ENCODE measurements at regions of chr14 and their contacts with region 1.

Region 1: DNA sequence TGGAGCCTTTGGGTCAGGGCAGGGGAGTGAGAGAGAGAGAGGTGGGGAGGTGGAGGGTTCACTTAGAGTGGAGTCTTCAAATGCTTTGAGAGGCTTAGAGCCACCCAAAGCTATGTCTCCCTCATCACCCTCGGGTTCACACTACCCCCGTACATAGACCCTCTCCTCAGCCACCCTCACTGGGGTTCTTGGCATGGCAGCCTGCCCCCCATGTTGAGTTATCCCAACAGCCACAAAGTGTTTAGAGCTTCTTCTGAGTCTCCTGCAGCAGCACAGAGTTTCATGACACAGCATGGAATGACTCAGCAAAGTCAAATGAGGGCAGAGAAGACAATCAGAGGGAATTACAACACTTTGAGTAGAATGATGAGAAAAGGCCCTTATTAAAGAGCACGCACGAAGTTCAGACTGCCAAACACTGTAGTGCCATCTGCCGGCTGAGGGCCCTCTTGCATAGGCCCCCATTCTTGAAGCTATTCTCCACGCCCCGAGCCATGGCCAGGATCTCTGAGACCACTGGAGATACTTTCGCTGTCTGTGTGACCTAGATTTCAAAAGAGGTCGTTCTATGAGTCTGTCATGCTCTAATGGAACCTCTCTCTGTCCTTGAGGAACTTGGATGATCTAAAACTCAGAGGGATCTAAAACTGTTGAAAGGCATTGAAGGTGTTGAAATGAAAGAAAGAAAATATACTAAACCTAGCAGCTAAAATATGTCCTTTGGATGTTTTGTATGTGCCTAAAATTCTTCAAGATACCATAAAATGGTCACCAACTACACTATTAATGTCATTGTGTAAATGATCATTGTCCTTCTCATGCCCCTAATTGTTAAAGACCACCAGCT is 221.9 kb downstream of the PELI2 start:
- DNase-seq: peak; percentile 89
- H3K4me3 ChIP-seq: no peak overlapping the region
- H3K27ac ChIP-seq: peak overlapping the region; percentile 55
- H3K4me1 ChIP-seq: peaks cover 43% of the 10 kb centered on the region
- H3K27me3 ChIP-seq: no peaks in the 10 kb centered on the region
- CTCF ChIP-seq: peak; percentile 86 to 94
- POLR2A ChIP-seq: no peak

Region 2: DNA sequence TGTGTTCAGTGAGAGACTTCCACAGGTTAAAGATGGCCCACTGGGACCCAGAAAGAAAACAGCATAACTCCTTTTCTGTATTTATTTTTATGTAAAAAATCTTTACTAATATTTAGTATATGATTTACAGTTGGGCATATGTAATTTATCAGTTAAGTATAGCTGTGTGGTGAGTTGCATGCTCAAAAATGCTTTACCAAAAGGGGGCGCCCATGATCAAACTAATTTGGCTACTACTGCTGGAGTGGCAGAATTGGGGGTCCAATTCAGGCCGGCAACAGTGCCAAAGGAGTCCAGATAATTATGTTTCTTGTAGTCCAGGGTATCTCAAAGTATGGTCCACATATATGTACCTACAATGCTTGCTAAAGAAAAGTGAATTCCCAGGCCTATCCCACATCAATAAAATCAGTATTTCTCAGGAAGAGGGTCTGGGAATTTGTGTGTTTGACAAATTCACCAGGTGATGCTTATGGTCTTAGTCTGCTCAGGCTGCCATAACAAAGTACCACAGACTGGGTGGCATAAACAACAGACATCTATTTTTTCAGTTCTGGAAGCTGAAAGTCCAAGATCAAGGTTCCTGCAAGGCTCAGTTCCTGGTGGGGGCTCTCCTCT is 608.1 kb before region 1 on chr14:
- CTCF ChIA-PET with region 1: interaction called, 50 read pairs
- POLR2A ChIA-PET with region 1: no interaction called
- dilution Hi-C with region 1: no loop called
- intact Hi-C with region 1: loop called (anchors 1 kb)
- DNase-seq: peak; percentile 46
- H3K4me3 ChIP-seq: no peak overlapping the region
- H3K27ac ChIP-seq: no peak overlapping the region
- H3K4me1 ChIP-seq: no peaks in the 10 kb centered on the region
- H3K27me3 ChIP-seq: no peaks in the 10 kb centered on the region
- CTCF ChIP-seq: peak; percentile 52 to 58
- POLR2A ChIP-seq: no peak

Region 3: DNA sequence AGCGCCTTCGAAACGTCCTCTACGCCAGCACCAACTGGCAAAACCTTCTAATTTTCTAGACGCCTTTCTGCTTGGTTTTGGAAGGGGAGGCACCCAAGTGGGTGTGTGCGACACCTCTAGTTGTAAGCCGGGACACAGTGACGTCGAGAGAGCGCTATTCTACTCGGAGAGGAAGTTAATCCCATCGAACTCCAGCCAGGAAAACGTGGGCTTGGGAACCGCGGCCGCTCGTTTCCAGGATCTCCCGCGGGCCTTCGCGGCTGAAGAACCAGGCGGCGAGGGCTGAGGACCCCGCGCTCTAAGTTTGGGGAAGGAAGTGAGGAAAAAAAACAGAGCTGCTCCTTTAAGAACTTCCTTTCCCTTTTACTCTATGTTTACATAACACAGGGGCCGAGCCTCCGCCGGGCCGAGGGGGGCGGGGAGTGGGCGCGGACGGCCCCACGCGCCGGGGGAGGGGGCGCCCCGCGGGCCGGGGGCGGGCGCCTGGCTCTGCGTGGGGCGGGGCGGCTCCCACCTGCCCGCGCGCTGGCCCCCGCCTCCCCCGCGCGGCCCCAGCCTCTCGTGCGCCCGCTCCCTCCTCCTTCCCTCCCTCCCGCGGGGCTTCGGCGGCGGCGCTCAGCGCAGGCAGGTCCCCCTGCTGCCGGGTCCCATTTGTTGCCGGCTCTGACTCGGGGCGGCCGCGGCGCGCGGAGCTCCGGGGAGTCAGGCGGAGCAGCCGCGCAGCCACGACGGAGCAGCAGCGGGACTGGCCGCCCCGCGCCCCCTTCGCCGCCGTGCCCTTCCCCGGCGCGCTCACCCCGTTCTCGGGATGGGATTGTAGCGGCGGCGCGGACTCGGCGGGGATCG is 222.1 kb before region 1 on chr14 and contains the start of gene PELI2:
- CTCF ChIA-PET with region 1: interaction called, 14 read pairs
- POLR2A ChIA-PET with region 1: no interaction called
- dilution Hi-C with region 1: no loop called
- intact Hi-C with region 1: loop called (anchors 1 kb)
- DNase-seq: peak; percentile 64
- H3K4me3 ChIP-seq: peak within 1 kb of the TSS; percentile 77 to 92 (median 90)
- H3K27ac ChIP-seq: peak within 1 kb of the TSS; percentile 48
- H3K4me1 ChIP-seq: peaks cover 19% of the 10 kb centered on the region
- H3K27me3 ChIP-seq: peaks cover 0 to 3% of the 10 kb centered on the region in 2 experiments
- CTCF ChIP-seq: peak in 1 of 2 donors; percentile 27
- POLR2A ChIP-seq: peak; percentile 46
- total RNA-seq, gene PELI2: 13.0 TPM in 2 replicates

Region 4: GRCh38 chr14:56271970-56272369 is 68.1 kb before region 1 on chr14:
- CTCF ChIA-PET with region 1: interaction called, 20 read pairs
- POLR2A ChIA-PET with region 1: no interaction called
- dilution Hi-C with region 1: no loop called
- intact Hi-C with region 1: loop called (anchors 1 kb)
- DNase-seq: peak; percentile 94
- H3K4me3 ChIP-seq: no peak overlapping the region
- H3K27ac ChIP-seq: peak overlapping the region; percentile 100
- H3K4me1 ChIP-seq: peaks cover 34% of the 10 kb centered on the region
- H3K27me3 ChIP-seq: no peaks in the 10 kb centered on the region
- CTCF ChIP-seq: no peak
- POLR2A ChIP-seq: no peak

Region 5: DNA sequence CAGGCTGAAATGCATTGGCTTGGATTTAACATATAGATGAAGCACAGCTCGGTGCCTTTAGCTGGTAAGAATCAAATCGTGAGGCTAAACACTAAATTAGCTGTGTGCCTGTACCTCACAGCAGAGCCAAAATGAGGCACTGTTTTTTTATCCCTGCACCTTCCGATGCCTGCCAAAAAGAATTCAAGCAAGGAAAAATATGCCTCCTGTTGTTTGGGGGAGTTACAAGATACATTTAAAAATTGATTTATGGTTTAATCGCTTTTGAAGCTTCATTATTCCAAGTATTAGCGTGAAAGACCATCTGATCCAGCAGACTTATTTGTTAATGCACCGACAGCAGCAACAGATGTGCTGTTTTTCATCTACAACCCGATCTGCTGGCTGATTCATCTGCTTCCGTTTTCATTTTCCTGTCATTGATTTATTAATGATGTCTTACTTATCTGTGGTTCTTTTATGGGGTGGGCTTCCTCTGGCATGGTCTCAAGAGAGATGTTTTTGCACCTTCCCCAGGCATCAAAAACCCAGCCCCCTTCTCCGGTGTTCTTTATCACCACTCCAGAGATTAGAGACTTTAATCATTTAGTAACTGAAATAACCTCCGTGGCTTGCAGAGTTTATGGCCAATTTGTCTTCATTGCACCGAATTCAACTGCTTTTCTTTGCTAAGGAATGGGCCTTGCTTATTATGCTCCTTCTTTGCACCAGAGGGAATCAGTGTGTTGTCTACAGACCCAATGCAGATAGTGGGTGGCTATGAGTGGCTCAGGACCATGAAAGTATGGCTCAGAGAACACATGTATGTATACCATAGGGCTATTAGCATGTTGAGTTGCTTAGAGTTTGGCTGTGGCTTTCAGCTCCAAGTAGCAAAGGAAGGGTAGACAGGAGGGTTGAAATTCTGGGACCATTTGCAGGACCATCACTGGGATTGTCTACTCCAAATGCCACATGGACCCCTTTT is 72.7 kb after region 1 on chr14:
- CTCF ChIA-PET with region 1: interaction called, 4 read pairs
- POLR2A ChIA-PET with region 1: no interaction called
- dilution Hi-C with region 1: no loop called
- intact Hi-C with region 1: loop called (anchors 2 kb)
- DNase-seq: peak; percentile 79
- H3K4me3 ChIP-seq: no peak overlapping the region
- H3K27ac ChIP-seq: no peak overlapping the region
- H3K4me1 ChIP-seq: peaks cover 24% of the 10 kb centered on the region
- H3K27me3 ChIP-seq: no peaks in the 10 kb centered on the region
- CTCF ChIP-seq: no peak
- POLR2A ChIP-seq: peak; percentile 39

Region 6: DNA sequence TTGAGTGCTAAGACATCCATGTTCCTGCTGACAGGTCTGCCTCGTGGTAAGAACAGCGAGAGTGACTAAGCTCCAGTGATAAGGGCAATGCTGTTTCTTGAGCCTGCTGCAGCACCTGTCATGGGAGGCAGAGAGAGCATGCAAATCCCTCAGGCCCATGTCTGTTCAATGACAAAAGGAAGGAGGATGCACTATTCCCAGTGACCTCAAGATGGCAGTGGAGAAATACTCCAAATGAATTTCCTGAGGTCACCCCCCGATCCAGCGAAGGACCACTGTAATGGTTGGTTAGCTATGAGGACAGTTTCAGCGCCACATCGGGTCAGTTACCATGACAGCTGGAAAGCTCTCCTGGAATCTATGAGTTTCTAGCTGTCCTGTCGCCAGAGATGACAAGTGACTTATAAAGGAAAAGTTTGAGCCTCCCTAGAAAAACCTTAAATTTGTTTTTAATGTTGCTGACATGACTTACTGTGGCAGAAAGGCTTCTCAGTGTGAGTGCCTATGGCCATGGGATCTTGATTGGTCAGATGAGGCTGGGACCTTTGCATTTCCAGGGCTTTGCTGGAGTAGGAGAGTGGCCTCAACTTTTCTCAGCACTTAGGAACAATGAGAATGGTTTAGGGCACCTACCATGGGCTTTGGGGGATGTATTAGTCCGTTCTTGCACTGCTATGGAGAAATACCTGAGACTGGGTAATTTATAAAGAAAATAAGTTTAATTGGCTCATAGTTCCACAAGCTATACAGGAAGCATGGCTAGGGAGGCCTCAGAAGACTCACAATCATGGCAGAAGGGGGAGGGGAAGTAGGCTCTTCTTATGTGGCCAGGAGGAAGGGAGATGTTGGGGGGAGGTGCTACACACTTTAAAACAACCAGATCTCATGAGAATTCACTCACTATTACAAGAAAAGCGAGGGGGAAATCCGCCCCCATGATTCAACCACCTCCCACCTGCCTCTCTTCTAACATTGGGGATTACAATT is 151.5 kb after region 1 on chr14:
- CTCF ChIA-PET with region 1: no interaction called
- POLR2A ChIA-PET with region 1: no interaction called
- dilution Hi-C with region 1: no loop called
- intact Hi-C with region 1: no loop called
- DNase-seq: peak; percentile 68
- H3K4me3 ChIP-seq: no peak overlapping the region
- H3K27ac ChIP-seq: no peak overlapping the region
- H3K4me1 ChIP-seq: no peaks in the 10 kb centered on the region
- H3K27me3 ChIP-seq: peaks cover 2 to 6% of the 10 kb centered on the region in 2 experiments
- CTCF ChIP-seq: peak; percentile 61 to 64
- POLR2A ChIP-seq: no peak

Measured in endothelial cell of umbilical vein (primary cell).